Calu3 (cell line): ENCODE measurements at regions of chr6 and their contacts with region 1.

Region 1: GRCh38 chr6:31769684-31770371 is 7.3 kb downstream of the VWA7 start:
- DNase-seq: peak; percentile 99
- H3K4me3 Mint-ChIP-seq: no peak overlapping the region
- H3K27ac Mint-ChIP-seq: peak overlapping the region; percentile 40
- H3K4me1 Mint-ChIP-seq: peaks cover 21% of the 10 kb centered on the region
- H3K27me3 Mint-ChIP-seq: no peaks in the 10 kb centered on the region
- CTCF ChIP-seq: peak; percentile 100

Region 2: DNA sequence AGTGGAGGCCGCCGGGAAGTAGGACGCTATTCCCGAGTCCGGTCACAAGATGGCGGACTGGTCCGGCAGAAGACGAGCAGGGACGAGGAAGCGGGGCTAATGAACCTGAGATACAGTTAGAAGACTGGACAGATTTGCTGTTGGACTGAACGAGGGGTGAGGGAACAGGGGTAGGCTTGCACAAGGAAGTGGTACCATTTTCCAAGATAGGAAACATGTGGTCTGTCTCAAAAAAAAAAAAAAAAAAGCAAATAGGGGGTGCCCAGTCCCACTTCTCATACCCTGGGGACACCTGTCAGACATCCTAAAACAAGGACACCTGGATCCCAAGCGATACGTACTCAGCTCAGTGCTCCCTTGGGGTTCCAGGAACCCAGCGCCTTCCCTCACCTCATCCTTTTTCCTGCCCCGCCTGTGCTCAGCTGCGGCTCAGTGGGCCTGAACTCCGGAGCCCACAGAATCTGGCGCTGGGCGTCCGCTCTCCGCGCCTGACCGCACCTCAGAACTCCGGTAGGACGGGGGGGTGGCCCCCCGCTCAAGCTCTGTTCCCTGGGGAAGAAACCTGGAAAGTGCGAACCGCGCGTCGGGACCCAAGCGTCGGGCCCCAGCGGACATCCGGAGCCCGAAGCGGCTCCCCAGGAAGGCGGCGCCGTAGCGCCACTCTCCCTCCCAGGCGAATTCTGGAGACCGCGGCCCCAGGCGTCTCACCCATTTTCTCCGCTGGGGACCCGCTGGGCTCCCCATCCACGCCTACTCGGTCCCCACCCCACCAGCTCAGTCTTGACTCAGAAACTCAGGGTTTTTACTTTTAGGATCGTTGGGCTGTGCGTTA is 88.8 kb before region 1 on chr6 and contains the start of gene LY6G5C:
- CTCF ChIA-PET with region 1: interaction called, 26 read pairs
- intact Hi-C with region 1: loop called (anchors 1 kb)
- DNase-seq: peak; percentile 94
- H3K4me3 Mint-ChIP-seq: peak within 1 kb of the TSS; percentile 75
- H3K27ac Mint-ChIP-seq: peak within 1 kb of the TSS; percentile 89
- H3K4me1 Mint-ChIP-seq: peaks cover 28% of the 10 kb centered on the region
- H3K27me3 Mint-ChIP-seq: no peaks in the 10 kb centered on the region
- CTCF ChIP-seq: peak; percentile 83
- total RNA-seq, gene LY6G5C: 4.9 and 5.4 TPM in 2 replicates

Region 3: DNA sequence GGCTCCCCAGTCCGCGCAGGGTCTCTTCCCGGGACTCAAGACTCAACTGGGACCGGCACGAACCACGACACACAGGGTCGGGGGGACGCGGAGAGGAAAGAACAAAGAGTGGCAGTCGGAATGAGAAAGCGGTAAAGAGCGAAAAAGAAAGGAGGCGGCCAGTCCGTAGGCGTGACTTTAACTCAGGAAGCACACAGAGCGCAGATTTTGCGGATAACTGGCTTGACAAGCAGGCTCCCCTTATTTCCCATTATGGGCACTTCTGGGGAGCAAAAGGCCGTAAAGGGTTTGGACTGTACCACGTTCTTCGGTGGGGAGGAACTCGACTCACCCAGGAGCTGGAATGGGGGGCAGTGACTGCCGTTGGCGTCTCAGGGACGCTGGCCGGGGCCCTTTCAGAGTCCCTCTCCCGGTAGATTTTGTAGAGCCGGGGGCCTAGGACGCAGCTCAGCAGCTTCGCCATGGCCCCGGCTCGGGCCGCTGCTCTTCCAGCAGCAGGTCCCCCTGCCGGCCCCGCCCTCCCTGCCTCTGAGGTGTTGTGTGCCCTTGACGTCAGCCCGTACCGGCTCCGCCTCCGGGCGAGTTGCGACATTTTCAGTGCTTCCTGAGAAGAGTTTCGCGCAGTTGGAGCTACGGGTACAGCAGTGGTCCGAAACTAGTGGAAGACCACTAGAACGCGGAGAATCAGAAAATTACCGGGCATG is 66.9 kb before region 1 on chr6 and contains the start of gene ABHD16A:
- CTCF ChIA-PET with region 1: interaction called, 12 read pairs
- intact Hi-C with region 1: no loop called
- DNase-seq: peak; percentile 100
- H3K4me3 Mint-ChIP-seq: peak within 1 kb of the TSS; percentile 77
- H3K27ac Mint-ChIP-seq: peak within 1 kb of the TSS; percentile 66
- H3K4me1 Mint-ChIP-seq: peaks cover 7% of the 10 kb centered on the region
- H3K27me3 Mint-ChIP-seq: no peaks in the 10 kb centered on the region
- CTCF ChIP-seq: peak; percentile 39
- total RNA-seq, gene ABHD16A: 89.9 and 99.1 TPM in 2 replicates

Region 4: DNA sequence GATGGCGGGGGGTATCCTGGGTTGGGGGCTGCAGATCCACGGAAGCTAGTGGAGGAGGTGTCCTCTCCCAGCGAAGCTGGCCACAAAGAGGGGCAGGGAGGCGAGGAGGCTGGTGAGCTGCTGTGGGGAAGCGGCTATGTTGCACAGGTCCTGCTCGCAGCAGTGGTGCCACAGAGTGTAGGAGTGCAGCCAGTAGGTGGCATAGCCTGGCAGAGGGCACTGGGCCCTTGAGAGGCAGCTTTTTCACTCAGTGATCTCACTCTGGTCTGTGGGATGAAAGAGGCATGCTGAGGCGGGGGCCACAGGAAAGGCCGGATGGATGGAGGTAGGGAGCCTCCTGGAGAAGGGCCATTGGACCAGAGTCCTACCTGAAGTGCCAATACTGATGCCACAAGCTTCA is 57.5 kb before region 1 on chr6:
- CTCF ChIA-PET with region 1: interaction called, 15 read pairs
- intact Hi-C with region 1: no loop called
- DNase-seq: peak; percentile 71
- H3K4me3 Mint-ChIP-seq: no peak overlapping the region
- H3K27ac Mint-ChIP-seq: no peak overlapping the region
- H3K4me1 Mint-ChIP-seq: peaks cover 25% of the 10 kb centered on the region
- H3K27me3 Mint-ChIP-seq: peaks cover 26% of the 10 kb centered on the region
- CTCF ChIP-seq: peak; percentile 54

Region 5: GRCh38 chr6:31729515-31729978 is 40.3 kb before region 1 on chr6:
- CTCF ChIA-PET with region 1: interaction called, 51 read pairs
- intact Hi-C with region 1: loop called (anchors 1 kb)
- DNase-seq: peak; percentile 98
- H3K4me3 Mint-ChIP-seq: peak overlapping the region; percentile 89
- H3K27ac Mint-ChIP-seq: peak overlapping the region; percentile 92
- H3K4me1 Mint-ChIP-seq: peaks cover 29% of the 10 kb centered on the region
- H3K27me3 Mint-ChIP-seq: no peaks in the 10 kb centered on the region
- CTCF ChIP-seq: no peak

Region 6: GRCh38 chr6:31806465-31807272 is 36.8 kb after region 1 on chr6 and contains the start of gene LSM2:
- CTCF ChIA-PET with region 1: interaction called, 21 read pairs
- intact Hi-C with region 1: no loop called
- DNase-seq: peak; percentile 100
- H3K4me3 Mint-ChIP-seq: peak within 1 kb of the TSS; percentile 99
- H3K27ac Mint-ChIP-seq: peak within 1 kb of the TSS; percentile 96
- H3K4me1 Mint-ChIP-seq: peaks cover 19% of the 10 kb centered on the region
- H3K27me3 Mint-ChIP-seq: no peaks in the 10 kb centered on the region
- CTCF ChIP-seq: peak; percentile 89
- total RNA-seq, gene LSM2: 126 and 144 TPM in 2 replicates